Endothelial cell of umbilical vein (primary cell): ENCODE measurements at regions of chr7 and their contacts with region 1.

Region 1: GRCh38 chr7:140062528-140063299 is at the start of gene PARP12:
- DNase-seq: peak; percentile 85
- H3K4me3 ChIP-seq: peak within 1 kb of the TSS; percentile 53 to 77 (median 71)
- H3K27ac ChIP-seq: peak within 1 kb of the TSS; percentile 84
- H3K4me1 ChIP-seq: peaks cover 36% of the 10 kb centered on the region
- H3K27me3 ChIP-seq: no peaks in the 10 kb centered on the region
- CTCF ChIP-seq: no peak
- POLR2A ChIP-seq: peak; percentile 64
- total RNA-seq, gene PARP12: 52.2 and 65.4 TPM in 2 replicates

Region 2: GRCh38 chr7:140041659-140042385 is 20.9 kb before region 1 on chr7:
- CTCF ChIA-PET with region 1: interaction called, 66 read pairs
- POLR2A ChIA-PET with region 1: interaction called, 5 read pairs
- dilution Hi-C with region 1: no loop called
- intact Hi-C with region 1: loop called (anchors 1 kb)
- DNase-seq: peak; percentile 91
- H3K4me3 ChIP-seq: peak overlapping the region; percentile 16 to 53 (median 18)
- H3K27ac ChIP-seq: peak overlapping the region; percentile 85
- H3K4me1 ChIP-seq: peaks cover 46% of the 10 kb centered on the region
- H3K27me3 ChIP-seq: no peaks in the 10 kb centered on the region
- CTCF ChIP-seq: no peak
- POLR2A ChIP-seq: peak; percentile 51

Region 3: GRCh38 chr7:140049339-140050024 is 13.2 kb before region 1 on chr7:
- CTCF ChIA-PET with region 1: interaction called, 6 read pairs
- POLR2A ChIA-PET with region 1: interaction called, 5 read pairs
- dilution Hi-C with region 1: no loop called
- intact Hi-C with region 1: loop called (anchors 1 kb)
- DNase-seq: peak; percentile 88
- H3K4me3 ChIP-seq: no peak overlapping the region
- H3K27ac ChIP-seq: peak overlapping the region; percentile 72
- H3K4me1 ChIP-seq: peaks cover 24% of the 10 kb centered on the region
- H3K27me3 ChIP-seq: no peaks in the 10 kb centered on the region
- CTCF ChIP-seq: no peak
- POLR2A ChIP-seq: no peak

Region 4: DNA sequence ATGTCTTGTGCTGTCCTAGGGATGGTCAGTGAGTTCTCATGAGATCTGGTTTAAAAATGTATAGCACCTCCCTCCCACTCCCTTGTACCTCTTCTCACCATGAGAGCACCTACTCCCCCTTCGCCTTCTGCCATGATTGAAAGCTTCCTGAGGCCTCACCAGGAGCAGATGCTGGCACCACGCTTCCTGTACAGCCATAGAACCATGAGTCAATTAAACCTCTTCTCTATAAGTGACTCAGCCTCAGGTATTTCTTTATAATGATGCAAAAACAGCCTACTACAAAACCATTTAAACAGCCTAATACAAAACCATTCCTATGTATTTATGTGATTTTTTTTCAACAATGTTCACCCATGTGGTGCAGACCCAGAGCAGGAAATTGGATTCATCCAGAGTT is 82.1 kb after region 1 on chr7:
- CTCF ChIA-PET with region 1: no interaction called
- POLR2A ChIA-PET with region 1: no interaction called
- dilution Hi-C with region 1: no loop called
- intact Hi-C with region 1: no loop called
- DNase-seq: no peak
- H3K4me3 ChIP-seq: no peak overlapping the region
- H3K27ac ChIP-seq: no peak overlapping the region
- H3K4me1 ChIP-seq: no peaks in the 10 kb centered on the region
- H3K27me3 ChIP-seq: no peaks in the 10 kb centered on the region
- CTCF ChIP-seq: no peak
- POLR2A ChIP-seq: no peak

Region 5: GRCh38 chr7:140326116-140326928 is 263.6 kb after region 1 on chr7:
- CTCF ChIA-PET with region 1: no interaction called
- POLR2A ChIA-PET with region 1: no interaction called
- dilution Hi-C with region 1: no loop called
- intact Hi-C with region 1: loop called (anchors 10 kb)
- DNase-seq: peak; percentile 71
- H3K4me3 ChIP-seq: no peak overlapping the region
- H3K27ac ChIP-seq: no peak overlapping the region
- H3K4me1 ChIP-seq: no peaks in the 10 kb centered on the region
- H3K27me3 ChIP-seq: no peaks in the 10 kb centered on the region
- CTCF ChIP-seq: peak; percentile 64 to 76
- POLR2A ChIP-seq: no peak